Common myeloid progenitor, CD34-positive (primary cell): ENCODE measurements at regions of chr12 and their contacts with region 1.

Region 1: DNA sequence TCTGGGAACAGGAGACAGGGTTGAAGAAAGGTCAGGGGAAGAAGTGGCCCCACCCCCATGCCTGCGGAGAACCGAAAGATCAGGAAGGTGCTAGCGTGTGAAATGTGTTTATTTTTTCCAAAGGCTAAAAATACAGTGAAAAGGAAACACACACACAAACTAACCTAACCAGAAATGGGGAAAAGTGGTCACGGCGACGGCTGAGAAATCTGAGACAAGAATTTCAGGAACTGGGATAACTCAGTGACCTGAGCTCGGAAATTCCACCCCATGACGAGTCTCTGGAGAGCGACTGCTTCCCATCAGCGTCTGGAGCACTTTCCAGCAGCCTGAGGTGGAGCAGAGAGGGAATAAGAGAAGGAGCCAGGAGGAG is 16.6 kb upstream of the RND1 start:
- DNase-seq: no peak
- H3K4me3 ChIP-seq: peak overlapping the region in 2 of 7 experiments; percentile 19 to 21
- H3K27ac ChIP-seq: no peak overlapping the region
- H3K4me1 ChIP-seq: peaks cover 0 to 12% (median 6%) of the 10 kb centered on the region in 4 experiments
- H3K27me3 ChIP-seq: peaks cover 0 to 23% (median 9%) of the 10 kb centered on the region in 5 experiments

Region 2: DNA sequence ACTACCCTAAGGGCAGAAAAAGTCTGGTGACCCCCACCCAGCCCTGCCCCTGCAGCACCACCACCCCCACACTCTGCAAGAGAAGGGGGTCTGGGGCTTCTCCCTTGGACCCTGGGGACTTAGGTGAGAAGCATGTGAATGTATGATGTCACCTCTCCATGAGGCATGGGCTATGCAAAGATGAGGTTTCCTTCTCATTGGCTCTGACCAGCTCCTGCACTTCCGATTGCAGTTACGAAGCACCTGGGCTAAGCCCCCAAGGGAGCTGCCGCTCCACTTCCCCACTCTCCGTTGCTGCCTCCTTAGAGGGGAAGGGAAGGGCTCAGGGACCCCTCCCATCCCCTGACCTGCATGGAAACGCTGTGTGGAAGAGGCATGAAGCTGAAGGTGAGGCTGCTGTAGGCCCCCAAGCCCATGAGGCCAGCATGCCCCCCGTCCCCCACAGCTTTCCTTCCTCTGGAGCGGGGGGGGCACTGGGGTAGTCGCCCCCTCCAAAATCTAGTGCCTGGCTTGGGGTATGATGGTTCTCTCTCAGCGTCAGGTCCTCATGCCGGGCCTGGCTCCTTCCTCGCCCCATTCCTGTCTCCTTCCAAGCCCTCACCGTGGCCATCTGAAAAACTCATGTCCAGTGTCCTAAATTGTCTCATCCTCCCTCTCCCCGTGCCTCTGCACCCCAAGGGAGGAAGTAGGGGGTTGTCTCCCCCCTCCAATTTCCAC is 24.9 kb before region 1 on chr12:
- CTCF ChIA-PET with region 1: interaction called, 16 read pairs
- POLR2A ChIA-PET with region 1: no interaction called
- DNase-seq: no peak
- H3K4me3 ChIP-seq: no peak overlapping the region
- H3K27ac ChIP-seq: no peak overlapping the region
- H3K4me1 ChIP-seq: peaks cover 6 to 8% (median 7%) of the 10 kb centered on the region in 4 experiments
- H3K27me3 ChIP-seq: no peaks in the 10 kb centered on the region